Calu3 (cell line): ENCODE measurements at regions of chr2 and their contacts with region 1.

Region 1: GRCh38 chr2:47906157-47907038 is at the start of gene FBXO11:
- DNase-seq: peak; percentile 95
- H3K4me3 Mint-ChIP-seq: peak within 1 kb of the TSS; percentile 96
- H3K27ac Mint-ChIP-seq: peak within 1 kb of the TSS; percentile 99
- H3K4me1 Mint-ChIP-seq: peaks cover 8% of the 10 kb centered on the region
- H3K27me3 Mint-ChIP-seq: no peaks in the 10 kb centered on the region
- CTCF ChIP-seq: no peak
- total RNA-seq, gene FBXO11: 58.0 and 65.3 TPM in 2 replicates

Region 2: DNA sequence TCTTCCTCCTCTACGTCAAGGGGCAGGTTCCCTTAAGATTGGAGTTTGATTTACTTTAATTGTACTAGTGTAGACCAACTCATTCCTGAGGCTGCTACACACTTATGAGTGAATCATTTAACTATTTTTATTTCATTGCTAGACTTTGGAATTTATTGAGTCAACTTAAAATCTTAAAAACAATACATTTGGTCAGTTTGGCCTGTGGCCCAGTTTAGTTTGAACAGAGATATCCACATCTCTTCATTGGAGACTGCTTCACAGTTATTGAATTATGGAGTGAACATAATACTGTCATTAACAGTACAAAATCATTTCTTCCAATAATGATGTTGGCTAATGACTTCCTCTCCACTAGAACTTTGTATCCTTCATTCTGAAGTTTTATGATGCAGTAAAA is 716.8 kb before region 1 on chr2:
- CTCF ChIA-PET with region 1: no interaction called
- intact Hi-C with region 1: no loop called
- DNase-seq: no peak
- H3K4me3 Mint-ChIP-seq: no peak overlapping the region
- H3K27ac Mint-ChIP-seq: peak overlapping the region; percentile 89
- H3K4me1 Mint-ChIP-seq: peaks cover 55% of the 10 kb centered on the region
- H3K27me3 Mint-ChIP-seq: no peaks in the 10 kb centered on the region
- CTCF ChIP-seq: no peak

Region 3: DNA sequence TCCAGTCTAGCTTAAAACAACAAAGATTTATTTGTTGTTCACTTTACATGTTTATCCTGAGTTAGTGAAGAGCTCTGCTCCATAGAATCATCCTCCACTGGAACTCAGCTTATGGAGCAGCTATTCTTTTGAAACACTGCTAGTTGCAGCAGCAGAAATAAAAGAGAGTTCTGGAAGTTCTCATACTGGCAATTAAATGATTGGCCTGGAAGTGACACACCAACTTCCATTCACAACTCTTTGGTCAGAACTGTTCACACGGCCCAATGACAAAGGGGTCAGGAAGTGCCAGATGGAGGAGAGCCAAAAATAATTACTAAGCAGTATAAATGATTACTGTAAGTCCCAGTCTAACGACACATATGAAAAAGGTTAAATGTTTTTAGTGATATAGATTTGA is 39.2 kb before region 1 on chr2:
- CTCF ChIA-PET with region 1: no interaction called
- intact Hi-C with region 1: loop called (anchors 5 kb)
- DNase-seq: peak; percentile 26
- H3K4me3 Mint-ChIP-seq: no peak overlapping the region
- H3K27ac Mint-ChIP-seq: peak overlapping the region; percentile 47
- H3K4me1 Mint-ChIP-seq: peaks cover 43% of the 10 kb centered on the region
- H3K27me3 Mint-ChIP-seq: no peaks in the 10 kb centered on the region
- CTCF ChIP-seq: no peak